ENCODE measurements at regions of chr19 and their contacts with region 1.

Region 1: DNA sequence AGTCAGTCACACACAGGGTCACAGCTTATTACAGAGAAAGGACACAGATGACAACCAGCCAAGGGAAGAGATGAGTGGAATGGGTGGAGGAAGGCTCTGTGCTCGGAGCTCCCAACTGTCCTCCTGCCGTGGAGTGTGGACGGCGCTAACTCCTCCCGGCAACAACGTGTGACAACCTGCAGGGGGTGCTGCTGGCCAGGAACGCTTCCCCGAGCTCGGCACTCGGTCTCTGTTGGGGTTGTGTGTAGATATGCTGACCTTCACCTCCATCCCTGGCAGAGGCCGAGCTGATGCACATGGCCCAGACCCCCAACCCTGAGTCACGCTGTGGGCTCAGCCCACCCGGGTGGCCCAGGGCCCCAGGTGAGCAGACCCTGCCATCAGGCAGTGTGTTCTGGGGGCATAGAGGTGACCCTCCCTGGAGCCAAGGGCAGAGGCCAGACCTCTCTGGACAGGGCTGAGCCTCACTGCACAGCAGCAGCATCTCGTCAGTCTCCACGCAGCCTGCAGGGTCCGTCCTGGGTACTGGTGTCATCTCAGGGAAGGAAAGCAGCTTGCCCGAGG is 14.1 kb downstream of the ZNF444 start:
- DNase-seq: peak in 1 of 2 experiments; percentile 87
- H3K4me3 ChIP-seq: no peak overlapping the region
- H3K27ac ChIP-seq: 0 out of 2 replicates have a peak overlapping the region, but pooled peaks have one; percentile 11
- H3K4me1 ChIP-seq: peaks cover 5 to 10% (median 8%) of the 10 kb centered on the region in 4 experiments
- H3K27me3 ChIP-seq: no peaks in the 10 kb centered on the region
- CTCF ChIP-seq: peak; percentile 87 to 97 (median 96)
- EP300 ChIP-seq: no peak
- POLR2A ChIP-seq: no peak
- RAD21 ChIP-seq: peak; percentile 85 to 88

Region 2: DNA sequence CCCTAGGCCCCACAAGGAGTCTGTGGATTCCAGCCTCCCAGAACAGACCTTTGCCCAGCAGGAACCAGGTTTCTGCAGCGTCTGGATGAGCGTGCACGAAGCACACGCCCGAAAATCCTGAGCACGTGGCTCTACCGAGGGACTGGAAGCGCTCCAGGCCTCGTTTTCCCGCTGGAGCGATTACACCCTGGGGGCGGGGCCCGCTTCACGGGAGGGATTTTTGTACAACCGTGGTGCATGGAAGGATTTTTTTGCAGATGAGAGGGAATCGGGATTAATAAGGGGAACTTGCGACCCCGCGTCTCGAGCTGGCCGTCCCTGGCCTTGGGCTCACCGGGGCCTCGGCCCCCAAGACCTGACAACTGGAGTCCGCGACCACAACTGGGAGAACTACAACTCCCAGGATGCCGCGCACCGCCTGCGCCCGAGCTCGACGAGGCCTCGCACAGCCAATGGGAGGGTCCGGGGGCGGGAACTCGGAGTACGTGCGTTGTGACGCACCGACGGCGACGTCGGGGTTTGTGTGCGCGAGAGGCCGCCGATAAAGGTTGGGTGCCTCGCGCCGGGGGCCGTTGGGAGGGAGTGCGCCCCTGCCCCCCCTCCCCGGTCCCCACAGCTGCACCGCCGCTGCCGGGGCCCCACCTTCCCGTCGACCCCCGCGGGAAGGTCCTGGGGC is 679.0 kb before region 1 on chr19 and contains the start of gene ZNF628:
- CTCF ChIA-PET with region 1: no interaction called
- POLR2A ChIA-PET with region 1: no interaction called
- DNase-seq: peak; percentile 90 to 96
- H3K4me3 ChIP-seq: peak within 1 kb of the TSS; percentile 66 to 95 (median 80)
- H3K27ac ChIP-seq: peak within 1 kb of the TSS; percentile 47; the same call in 1 of the 2 replicates
- H3K4me1 ChIP-seq: peaks cover 0 to 20% (median 7%) of the 10 kb centered on the region in 4 experiments; a peak in 5 of 7 replicates
- H3K27me3 ChIP-seq: no peaks in the 10 kb centered on the region; a peak in 2 of 7 replicates
- CTCF ChIP-seq: no peak
- EP300 ChIP-seq: no peak
- POLR2A ChIP-seq: peak in 1 of 2 experiments; percentile 64; a peak in 1 of 3 replicates
- RAD21 ChIP-seq: no peak
- total RNA-seq, gene ZNF628: 10.8 and 12.9 TPM in 2 replicates

Region 3: DNA sequence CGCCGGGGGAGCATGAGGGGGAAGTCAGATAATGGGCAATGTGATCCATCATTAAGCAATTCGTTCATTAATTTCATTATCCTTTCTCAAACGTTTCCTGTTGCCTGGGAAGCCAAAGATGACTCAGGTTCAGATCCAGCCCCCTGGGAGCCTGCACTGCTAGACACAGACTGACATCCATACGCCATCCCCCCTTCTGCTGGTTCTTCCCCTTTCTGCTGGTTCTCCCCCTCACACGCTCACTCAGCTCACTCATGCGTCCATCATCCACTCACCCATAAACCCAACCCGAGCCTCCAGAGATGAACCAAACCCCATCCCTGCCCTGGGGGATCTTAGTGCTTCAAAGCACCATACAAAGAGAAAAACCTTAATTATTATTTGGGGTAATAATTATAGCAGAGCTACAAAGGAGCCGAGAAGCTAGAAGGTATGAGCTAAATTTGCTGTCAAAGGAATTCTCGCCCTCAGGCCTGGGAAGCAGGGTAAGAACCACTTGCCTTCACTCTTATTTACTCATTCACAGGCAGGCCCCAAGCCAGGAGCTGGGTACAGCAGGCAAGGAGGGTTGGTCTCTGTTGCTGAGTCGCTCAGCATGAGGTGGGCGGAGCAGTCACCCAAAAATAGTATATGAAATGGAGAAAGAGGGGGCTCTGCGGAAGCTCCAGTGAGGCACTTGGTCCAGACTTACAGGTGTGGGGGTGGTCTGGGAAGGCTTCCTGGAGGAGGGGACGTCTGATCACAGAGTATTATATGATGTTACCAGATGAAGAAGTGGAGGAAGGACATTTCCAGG is 21.1 kb before region 1 on chr19:
- CTCF ChIA-PET with region 1: interaction called, 35 read pairs
- POLR2A ChIA-PET with region 1: interaction called, 3 read pairs
- DNase-seq: no peak
- H3K4me3 ChIP-seq: no peak overlapping the region
- H3K27ac ChIP-seq: no peak overlapping the region
- H3K4me1 ChIP-seq: peaks cover 3 to 15% (median 7%) of the 10 kb centered on the region in 4 experiments
- H3K27me3 ChIP-seq: no peaks in the 10 kb centered on the region
- CTCF ChIP-seq: no peak
- EP300 ChIP-seq: no peak
- POLR2A ChIP-seq: no peak
- RAD21 ChIP-seq: no peak

Region 4: DNA sequence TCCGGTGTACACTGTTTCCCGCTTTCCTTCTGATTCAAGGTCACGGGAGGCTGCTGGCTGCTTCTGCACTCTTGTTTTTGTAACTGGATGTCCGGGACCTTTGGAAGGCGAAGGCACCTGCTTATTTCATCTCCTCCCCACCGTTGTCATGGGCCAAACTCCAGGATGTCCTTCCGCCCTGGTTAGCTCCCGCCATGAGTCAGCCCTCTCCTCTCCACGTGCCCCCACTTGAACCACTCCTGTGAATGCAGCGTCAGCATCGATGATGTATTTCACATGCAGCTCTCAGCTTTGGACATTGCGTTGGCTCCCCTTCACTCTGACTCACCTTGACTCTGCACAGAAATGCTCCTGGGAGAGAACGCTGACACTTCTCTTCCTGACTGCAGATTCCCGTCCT is 15.1 kb after region 1 on chr19:
- CTCF ChIA-PET with region 1: interaction called, 137 read pairs
- POLR2A ChIA-PET with region 1: interaction called, 5 read pairs
- DNase-seq: no peak
- H3K4me3 ChIP-seq: no peak overlapping the region
- H3K27ac ChIP-seq: no peak overlapping the region
- H3K4me1 ChIP-seq: no peaks in the 10 kb centered on the region
- H3K27me3 ChIP-seq: no peaks in the 10 kb centered on the region
- CTCF ChIP-seq: no peak
- EP300 ChIP-seq: no peak
- POLR2A ChIP-seq: no peak
- RAD21 ChIP-seq: no peak

Region 5: DNA sequence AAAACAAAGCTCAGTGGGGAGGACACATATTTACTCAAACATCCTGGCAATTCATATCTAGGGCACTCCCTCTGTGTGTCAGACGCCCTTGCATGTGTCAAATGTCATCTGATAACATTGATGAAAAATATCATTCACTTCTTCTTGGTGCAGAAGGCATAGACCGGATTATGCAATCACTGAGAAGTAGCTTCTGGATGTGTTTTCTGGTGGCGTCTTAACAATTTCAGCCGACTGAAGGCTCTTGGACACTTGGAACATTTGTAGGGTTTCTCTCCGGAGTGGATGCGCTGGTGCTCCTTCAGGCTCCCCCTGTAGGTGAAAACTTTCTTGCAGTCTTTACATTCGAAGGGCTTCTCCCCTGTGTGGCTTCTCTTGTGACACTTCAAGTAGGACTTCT is 66.2 kb after region 1 on chr19:
- CTCF ChIA-PET with region 1: interaction called, 19 read pairs
- POLR2A ChIA-PET with region 1: no interaction called
- DNase-seq: no peak
- H3K4me3 ChIP-seq: no peak overlapping the region
- H3K27ac ChIP-seq: no peak overlapping the region
- H3K4me1 ChIP-seq: peaks cover 0 to 8% (median 4%) of the 10 kb centered on the region in 4 experiments; a peak in 6 of 7 replicates
- H3K27me3 ChIP-seq: no peaks in the 10 kb centered on the region; a peak in 1 of 7 replicates
- CTCF ChIP-seq: peak; percentile 22 to 50 (median 42)
- EP300 ChIP-seq: no peak
- POLR2A ChIP-seq: no peak
- RAD21 ChIP-seq: peak in 1 of 2 experiments; percentile 40; a peak in 3 of 4 replicates

Region 6: DNA sequence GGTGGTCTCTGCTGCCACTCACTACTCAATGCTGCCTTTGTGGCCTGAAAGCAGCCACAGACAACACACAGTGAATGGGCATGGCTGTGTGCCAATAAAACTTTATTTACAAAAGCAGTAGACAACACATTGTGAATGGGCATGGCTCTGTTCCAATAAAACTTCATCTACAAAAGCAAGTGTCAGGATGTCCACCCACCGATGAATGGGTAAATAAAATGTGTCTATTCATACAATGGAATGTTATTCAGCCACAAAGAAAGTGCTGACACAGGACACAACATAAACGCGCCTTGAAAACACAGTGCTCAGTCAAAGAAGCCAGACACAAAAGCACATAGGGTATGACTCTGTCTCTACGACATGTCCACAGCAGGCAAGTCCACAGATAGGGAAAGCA is 139.3 kb after region 1 on chr19:
- CTCF ChIA-PET with region 1: no interaction called
- POLR2A ChIA-PET with region 1: no interaction called
- DNase-seq: no peak
- H3K4me3 ChIP-seq: no peak overlapping the region
- H3K27ac ChIP-seq: no peak overlapping the region
- H3K4me1 ChIP-seq: no peaks in the 10 kb centered on the region; a peak in 1 of 7 replicates
- H3K27me3 ChIP-seq: no peaks in the 10 kb centered on the region
- CTCF ChIP-seq: no peak
- EP300 ChIP-seq: no peak
- POLR2A ChIP-seq: no peak
- RAD21 ChIP-seq: no peak